ENCODE measurements at regions of chr18 and their contacts with region 1.

Region 1: GRCh38 chr18:57621246-57621604 is 411 bp downstream of the NARS1 start:
- DNase-seq: peak in 1 of 2 donors; percentile 65
- H3K4me3 ChIP-seq: peak overlapping the region; percentile 92 to 98
- H3K27ac ChIP-seq: peak overlapping the region; percentile 86 to 91
- H3K4me1 ChIP-seq: peaks cover 0 to 7% of the 10 kb centered on the region in 2 donors
- H3K27me3 ChIP-seq: no peaks in the 10 kb centered on the region
- CTCF ChIP-seq: no peak

Region 2: DNA sequence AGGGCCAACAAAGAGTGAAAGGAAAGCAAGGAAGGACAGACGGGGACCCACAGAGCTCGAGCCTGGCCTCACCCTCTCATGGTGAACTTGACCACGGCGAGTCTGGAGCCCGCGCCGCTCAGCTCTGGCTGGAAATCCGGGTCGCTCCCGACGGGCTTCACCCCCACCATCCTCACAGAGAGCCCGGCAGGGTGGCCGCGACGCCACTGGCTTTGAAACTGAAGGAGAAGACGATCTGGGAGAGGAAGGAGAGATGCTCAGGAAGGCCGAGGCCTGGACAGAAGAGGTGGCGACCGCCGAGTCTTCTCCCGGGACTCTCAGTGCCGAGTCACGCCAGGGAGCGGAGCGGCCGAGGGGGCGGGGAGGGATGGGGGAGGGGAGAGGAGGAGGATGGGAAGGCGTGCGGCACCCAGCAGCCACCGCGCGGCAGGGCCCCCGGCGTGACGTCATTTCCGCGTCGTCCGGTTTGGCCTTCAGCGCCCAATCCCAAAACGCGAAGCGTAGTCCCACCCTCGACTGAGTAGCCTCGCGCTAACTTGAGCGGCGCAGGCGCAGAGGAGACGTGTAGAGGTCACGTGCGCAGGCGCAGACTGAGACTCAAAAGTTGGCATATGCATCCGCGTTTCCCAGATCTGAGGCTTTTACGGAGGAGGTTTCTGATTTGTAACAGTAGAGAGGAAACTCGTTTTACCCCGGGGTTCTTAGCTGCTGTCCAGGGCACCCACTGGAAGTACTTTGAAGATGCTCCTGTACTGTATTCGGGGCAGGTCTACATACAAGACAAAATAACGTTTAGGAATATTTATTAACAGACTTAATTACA is 982.7 kb before region 1 on chr18 and contains the start of gene TXNL1:
- intact Hi-C with region 1: loop called (anchors 1 kb)
- DNase-seq: peak; percentile 95 to 99
- H3K4me3 ChIP-seq: peak within 1 kb of the TSS; percentile 78 to 81
- H3K27ac ChIP-seq: peak within 1 kb of the TSS; percentile 97 to 98
- H3K4me1 ChIP-seq: peaks cover 0 to 5% of the 10 kb centered on the region in 2 donors
- H3K27me3 ChIP-seq: no peaks in the 10 kb centered on the region
- CTCF ChIP-seq: no peak
- total RNA-seq, gene TXNL1: 12.3 TPM

Region 3: DNA sequence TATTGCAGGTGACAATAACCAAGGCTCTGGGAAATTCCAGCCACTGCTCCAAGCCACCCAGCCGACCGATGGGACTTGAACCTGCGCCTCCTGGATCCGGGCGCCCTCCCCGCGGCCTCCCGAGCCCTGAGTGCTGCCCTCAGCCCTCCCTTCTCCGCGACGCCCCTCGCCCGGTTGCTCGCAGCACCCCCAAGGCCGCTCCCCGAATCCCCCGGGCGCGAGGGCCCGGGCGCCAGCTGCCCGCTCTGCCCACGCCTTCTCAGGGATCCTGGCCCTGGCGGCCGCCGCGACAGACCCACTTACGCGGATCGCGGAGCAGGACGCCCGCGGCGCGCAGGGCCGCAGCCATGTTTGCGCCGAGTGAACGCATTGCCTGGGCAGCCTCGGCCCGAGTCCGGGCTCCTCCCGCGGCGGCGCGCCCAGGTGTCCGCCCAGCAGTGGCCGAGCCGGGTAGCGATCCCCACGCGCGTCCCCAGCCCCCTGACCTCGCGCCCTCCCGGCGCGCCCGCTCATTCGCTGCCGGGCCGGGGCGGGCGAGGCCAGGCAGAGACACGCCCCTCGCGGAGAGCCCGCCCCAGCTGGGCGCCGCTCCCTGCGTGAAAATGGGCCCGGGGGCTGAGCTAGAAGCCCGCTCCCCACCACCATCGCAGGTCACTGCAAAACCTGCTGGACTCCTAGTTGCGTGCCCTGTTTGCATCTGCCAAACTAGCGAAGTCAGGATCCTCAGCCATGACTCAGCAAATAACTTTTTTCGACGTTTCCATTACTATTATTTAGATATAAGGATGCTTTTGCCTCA is 34.8 kb before region 1 on chr18 and contains the start of gene FECH:
- intact Hi-C with region 1: loop called (anchors 5 kb)
- DNase-seq: peak; percentile 26 to 89
- H3K4me3 ChIP-seq: peak within 1 kb of the TSS; percentile 83 to 90
- H3K27ac ChIP-seq: peak within 1 kb of the TSS; percentile 81 to 87
- H3K4me1 ChIP-seq: peaks cover 5 to 15% of the 10 kb centered on the region in 2 donors
- H3K27me3 ChIP-seq: no peaks in the 10 kb centered on the region
- CTCF ChIP-seq: peak in 1 of 3 experiments; percentile 6
- total RNA-seq, gene FECH: 33.0 TPM

Region 4: DNA sequence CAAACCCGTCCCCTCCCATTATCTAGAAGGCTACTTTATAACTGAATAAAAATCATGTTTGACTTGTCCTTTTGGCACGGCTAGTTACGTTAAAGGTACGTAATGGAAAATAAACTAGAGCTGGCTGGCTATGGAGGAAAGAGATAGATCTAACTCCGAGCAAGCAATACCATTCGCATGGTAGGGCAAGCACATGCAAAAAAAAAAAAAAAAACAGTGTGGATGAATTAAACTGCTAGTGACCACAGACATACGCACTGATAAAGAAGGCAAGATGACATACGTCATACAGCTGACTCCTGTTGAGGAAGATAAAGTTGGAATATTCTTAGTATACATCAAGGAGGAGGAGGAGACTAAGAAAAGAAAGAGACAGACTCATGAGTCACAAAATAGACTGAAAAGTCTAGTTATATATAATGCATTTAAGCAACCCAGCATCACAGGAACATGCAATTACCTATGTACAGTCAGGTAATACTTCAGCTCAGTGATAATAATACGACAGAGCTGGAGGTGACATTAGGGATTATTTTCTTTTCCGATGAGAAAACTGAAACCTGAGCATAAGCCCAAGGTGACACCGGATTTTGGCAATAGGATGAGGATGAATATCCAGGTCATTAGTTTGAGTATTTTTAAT is 38.4 kb after region 1 on chr18:
- intact Hi-C with region 1: no loop called
- DNase-seq: no peak
- H3K4me3 ChIP-seq: no peak overlapping the region
- H3K27ac ChIP-seq: peak overlapping the region; percentile 62 to 63
- H3K4me1 ChIP-seq: peaks cover 0 to 11% of the 10 kb centered on the region in 2 donors
- H3K27me3 ChIP-seq: no peaks in the 10 kb centered on the region
- CTCF ChIP-seq: no peak

Region 5: DNA sequence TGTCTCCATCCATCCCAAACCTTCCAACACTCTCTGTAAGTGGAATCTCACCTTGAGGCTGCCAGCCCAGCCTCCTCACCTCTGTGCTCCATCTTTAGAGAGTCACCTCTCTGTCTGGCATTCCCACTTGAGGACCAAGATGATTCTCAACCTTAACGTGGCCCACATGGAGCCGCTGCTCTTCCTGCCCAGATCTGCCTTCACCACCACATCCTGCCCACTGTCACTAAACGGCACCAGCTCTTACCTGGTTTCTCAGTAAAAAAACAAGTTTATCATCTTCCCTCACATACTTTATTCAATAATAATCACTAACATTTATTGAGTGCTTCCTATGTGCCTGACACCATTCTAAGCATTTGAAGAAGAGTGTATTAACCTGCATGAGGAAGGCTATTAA is 503.2 kb after region 1 on chr18:
- intact Hi-C with region 1: loop called (anchors 5 kb)
- DNase-seq: no peak
- H3K4me3 ChIP-seq: no peak overlapping the region
- H3K27ac ChIP-seq: no peak overlapping the region
- H3K4me1 ChIP-seq: no peaks in the 10 kb centered on the region
- H3K27me3 ChIP-seq: no peaks in the 10 kb centered on the region
- CTCF ChIP-seq: no peak

Measured in ascending aorta (tissue), 2 donors.